Testis (tissue), 5 donors: ENCODE measurements at regions of chr2 and their contacts with region 1.

Region 1: DNA sequence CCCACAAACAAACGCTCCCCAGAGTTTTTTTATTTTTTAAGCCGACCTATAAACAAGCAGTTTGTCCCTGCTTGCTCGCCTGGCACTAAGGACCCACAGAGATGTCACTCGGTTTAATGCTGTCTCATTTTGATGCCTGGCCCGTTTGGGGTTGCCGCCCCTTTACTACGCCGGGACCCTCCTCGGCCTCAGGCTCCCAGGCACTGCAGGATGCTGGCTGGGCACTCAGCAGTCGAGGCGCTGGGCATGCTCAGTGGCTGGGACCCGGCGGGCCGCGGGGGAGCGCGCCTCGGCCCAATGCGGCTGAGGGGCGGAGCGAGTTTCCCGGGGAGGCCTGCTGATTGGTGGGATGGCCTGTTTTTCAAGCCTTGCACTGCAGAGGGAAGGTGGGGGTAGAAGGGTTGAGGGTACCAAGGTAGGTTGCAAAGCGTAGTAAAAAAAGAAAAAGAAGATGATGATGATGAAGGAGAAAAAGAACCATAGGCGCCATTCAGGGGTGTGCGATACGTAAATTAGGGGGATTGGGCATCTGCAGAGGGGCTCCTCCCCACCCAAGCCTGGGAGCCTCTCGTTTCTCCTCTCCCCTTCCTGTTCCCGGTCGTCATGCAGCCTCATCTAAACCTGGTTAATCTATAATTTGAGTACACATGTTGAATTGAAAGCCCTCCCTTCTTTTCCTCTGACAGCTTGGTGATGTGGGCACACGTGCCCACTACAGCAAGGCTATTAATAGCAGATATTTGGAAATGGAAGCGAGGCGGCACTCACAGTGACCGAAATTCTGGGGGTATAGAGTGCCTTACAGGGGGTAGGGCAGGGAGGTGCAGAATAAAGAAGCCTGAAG is 1.5 kb upstream of the IRS1 start:
- DNase-seq: peak; percentile 81
- H3K4me3 ChIP-seq: peak overlapping the region; percentile 29 to 71
- H3K27ac ChIP-seq: peak overlapping the region in 1 of 2 donors; percentile 82
- H3K4me1 ChIP-seq: peaks cover 14% of the 10 kb centered on the region
- H3K27me3 ChIP-seq: no peaks in the 10 kb centered on the region
- CTCF ChIP-seq: no peak
- POLR2A ChIP-seq: no peak

Region 2: GRCh38 chr2:225156853-225157451 is 1644.2 kb before region 1 on chr2:
- intact Hi-C with region 1: no loop called
- DNase-seq: no peak
- H3K4me3 ChIP-seq: no peak overlapping the region
- H3K27ac ChIP-seq: no peak overlapping the region
- H3K4me1 ChIP-seq: no peaks in the 10 kb centered on the region
- H3K27me3 ChIP-seq: no peaks in the 10 kb centered on the region
- CTCF ChIP-seq: no peak
- POLR2A ChIP-seq: no peak

Region 3: DNA sequence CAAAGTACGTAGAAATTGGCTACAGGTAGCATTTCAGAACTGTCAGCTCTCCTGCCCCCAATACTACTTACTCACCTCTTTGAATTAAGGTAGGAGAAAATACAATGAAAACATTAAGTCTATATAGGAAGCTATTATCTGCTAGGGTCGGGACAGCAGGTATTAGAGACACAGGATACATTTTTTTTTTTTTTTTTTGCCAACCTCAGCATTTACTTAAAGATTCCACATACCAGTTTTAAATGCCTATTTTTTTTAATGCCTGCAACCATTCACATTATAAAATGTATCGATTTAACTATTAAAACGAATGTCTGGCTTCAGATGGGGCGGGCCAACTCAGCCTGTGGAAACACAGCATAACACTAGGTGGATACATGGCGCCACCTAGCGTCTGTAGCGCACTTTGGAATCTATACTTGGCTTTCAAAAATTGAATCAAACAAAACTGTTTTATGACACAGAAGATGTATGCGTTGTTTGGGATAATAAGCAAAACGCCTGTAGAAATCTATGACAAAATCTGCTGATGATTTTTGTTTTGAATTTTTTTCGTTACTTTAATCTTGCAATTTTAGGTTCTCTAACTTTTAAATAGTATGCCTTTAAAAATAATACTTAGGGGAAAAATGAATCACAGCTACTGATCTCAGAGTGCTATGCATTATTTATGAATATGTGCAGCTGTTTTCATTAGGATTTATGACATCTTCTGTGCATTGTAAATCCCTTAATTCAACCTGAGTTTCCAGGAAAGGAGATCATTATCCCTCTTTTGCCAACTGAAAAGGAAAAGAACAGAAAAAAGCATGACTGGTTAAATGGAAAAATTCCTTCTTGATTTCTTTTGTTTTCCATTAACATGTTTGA is 1140.7 kb before region 1 on chr2:
- intact Hi-C with region 1: loop called (anchors 10 kb)
- DNase-seq: peak; percentile 92
- H3K4me3 ChIP-seq: no peak overlapping the region
- H3K27ac ChIP-seq: no peak overlapping the region
- H3K4me1 ChIP-seq: no peaks in the 10 kb centered on the region
- H3K27me3 ChIP-seq: no peaks in the 10 kb centered on the region
- CTCF ChIP-seq: peak; percentile 69 to 84 (median 80)
- POLR2A ChIP-seq: no peak